Activated T-helper 1 cell treated with anti-CD3 and anti-CD28 coated beads, Interleukin-12 subunit alpha, Interleukin-12 subunit beta, Interleukin-2, Interleukin-4 antibody, amounts not matched to agents 30 ng/mL and 10 ng/mL and 1 ng/mL, durations not matched to agents 14 hours and 24 hours and 36 hours (primary cell): ENCODE measurements at regions of chrX and their contacts with region 1.

Region 1: GRCh38 chrX:11533211-11533651 is 132.5 kb downstream of the ARHGAP6 start:
- DNase-seq: no peak
- H3K4me3 Mint-ChIP-seq: no peak overlapping the region
- H3K27ac Mint-ChIP-seq: no peak overlapping the region
- H3K4me1 Mint-ChIP-seq: no peaks in the 10 kb centered on the region
- H3K27me3 Mint-ChIP-seq: peaks cover 8% of the 10 kb centered on the region

Region 2: DNA sequence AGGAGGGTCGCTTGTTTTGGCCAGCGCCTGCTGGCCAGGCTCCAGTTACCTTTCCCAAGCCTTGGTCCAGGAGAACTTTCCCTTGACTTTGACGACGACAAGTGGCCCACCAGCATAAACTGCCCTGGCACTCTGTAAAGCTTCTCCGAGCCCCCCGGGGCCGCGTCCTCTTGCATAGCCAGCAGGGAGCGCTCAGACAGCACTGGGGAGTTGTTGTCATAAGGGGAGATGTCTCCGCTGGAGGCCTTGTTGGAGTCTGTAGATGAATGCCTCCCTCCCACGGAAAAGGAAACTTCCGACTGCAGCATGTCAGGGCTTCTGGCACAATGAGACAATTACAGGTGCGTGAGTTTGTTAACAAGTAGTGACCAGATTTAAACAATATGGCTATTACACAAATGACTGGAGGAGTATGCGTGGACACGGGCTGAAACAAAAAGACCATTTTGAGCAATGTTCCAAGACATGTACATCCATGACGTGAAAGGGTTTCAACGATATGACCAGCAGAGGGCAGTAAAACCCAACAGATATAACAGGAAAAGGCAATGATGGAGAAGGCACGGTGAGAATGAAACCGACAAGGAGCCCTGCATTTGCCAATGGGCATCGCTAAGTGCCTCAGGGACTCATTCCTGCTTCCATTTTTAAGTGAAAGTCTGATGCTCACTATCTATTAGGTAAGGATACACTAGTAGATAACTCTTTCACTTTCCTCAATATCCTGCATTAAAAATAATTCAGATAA is 389.1 kb before region 1 on chrX:
- intact Hi-C with region 1: loop called (anchors 1 kb)
- DNase-seq: peak; percentile 28
- H3K4me3 Mint-ChIP-seq: no peak overlapping the region
- H3K27ac Mint-ChIP-seq: no peak overlapping the region
- H3K4me1 Mint-ChIP-seq: no peaks in the 10 kb centered on the region
- H3K27me3 Mint-ChIP-seq: peaks cover 4% of the 10 kb centered on the region

Region 3: GRCh38 chrX:11188664-11189063 is 344.6 kb before region 1 on chrX:
- intact Hi-C with region 1: no loop called
- DNase-seq: no peak
- H3K4me3 Mint-ChIP-seq: no peak overlapping the region
- H3K27ac Mint-ChIP-seq: no peak overlapping the region
- H3K4me1 Mint-ChIP-seq: no peaks in the 10 kb centered on the region
- H3K27me3 Mint-ChIP-seq: no peaks in the 10 kb centered on the region

Region 4: GRCh38 chrX:11724122-11725017 is 191.1 kb after region 1 on chrX:
- intact Hi-C with region 1: loop called (anchors 1 kb)
- DNase-seq: no peak
- H3K4me3 Mint-ChIP-seq: no peak overlapping the region
- H3K27ac Mint-ChIP-seq: no peak overlapping the region
- H3K4me1 Mint-ChIP-seq: no peaks in the 10 kb centered on the region
- H3K27me3 Mint-ChIP-seq: peaks cover 2% of the 10 kb centered on the region